ENCODE measurements at regions of chr16 and their contacts with region 1.

Region 1: DNA sequence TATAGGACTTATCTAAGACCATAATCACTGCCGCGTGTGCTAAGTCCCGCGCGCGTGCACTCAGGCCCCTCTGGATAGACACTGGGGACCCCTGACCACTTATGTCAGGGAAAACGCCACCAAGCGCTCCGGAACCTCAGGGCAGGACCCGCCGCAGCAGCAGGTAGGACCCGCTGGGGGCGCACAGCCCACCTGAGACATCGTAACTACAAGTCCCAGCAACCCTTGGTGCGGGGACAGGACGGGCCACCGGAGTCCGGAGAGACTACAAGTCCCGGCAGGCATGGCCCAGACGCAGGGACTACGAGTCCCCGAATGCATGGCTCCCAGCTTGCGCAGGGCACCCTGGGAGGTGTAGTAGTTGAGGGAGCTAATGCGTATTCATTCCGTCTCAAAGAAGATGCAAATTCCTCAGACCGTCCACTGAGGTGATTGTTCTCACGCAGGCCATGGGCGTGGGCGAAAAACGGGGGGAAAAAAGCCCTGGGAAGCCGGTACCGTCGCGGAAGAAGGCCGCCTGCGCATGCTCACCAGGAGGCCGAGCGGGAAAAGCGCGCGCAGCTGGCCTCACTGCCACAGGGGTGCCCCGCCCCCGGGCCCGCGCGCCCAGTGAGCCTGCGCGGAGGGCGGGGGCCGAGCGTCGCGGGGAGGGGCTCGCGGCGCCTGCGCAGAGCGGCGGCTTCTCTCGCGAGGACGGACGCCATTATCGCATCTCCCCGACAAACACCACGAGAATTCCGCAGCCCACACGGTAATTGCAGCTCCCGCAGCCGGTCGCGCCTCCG is at the start of gene BANP:
- DNase-seq: peak; percentile 99
- H3K4me3 ChIP-seq: peak within 1 kb of the TSS; percentile 97
- H3K27ac ChIP-seq: peak within 1 kb of the TSS; percentile 97
- H3K4me1 ChIP-seq: peaks cover 14% of the 10 kb centered on the region
- H3K27me3 ChIP-seq: no peaks in the 10 kb centered on the region
- CTCF ChIP-seq: peak; percentile 48
- total RNA-seq, gene BANP: 35.2 and 44.3 TPM in 2 replicates

Region 2: GRCh38 chr16:88022076-88023062 is 71.4 kb after region 1 on chr16:
- CTCF ChIA-PET with region 1: no interaction called
- POLR2A ChIA-PET with region 1: no interaction called
- intact Hi-C with region 1: loop called (anchors 10 kb)
- DNase-seq: no peak
- H3K4me3 ChIP-seq: no peak overlapping the region
- H3K27ac ChIP-seq: no peak overlapping the region
- H3K4me1 ChIP-seq: no peaks in the 10 kb centered on the region
- H3K27me3 ChIP-seq: no peaks in the 10 kb centered on the region
- CTCF ChIP-seq: no peak

Region 3: DNA sequence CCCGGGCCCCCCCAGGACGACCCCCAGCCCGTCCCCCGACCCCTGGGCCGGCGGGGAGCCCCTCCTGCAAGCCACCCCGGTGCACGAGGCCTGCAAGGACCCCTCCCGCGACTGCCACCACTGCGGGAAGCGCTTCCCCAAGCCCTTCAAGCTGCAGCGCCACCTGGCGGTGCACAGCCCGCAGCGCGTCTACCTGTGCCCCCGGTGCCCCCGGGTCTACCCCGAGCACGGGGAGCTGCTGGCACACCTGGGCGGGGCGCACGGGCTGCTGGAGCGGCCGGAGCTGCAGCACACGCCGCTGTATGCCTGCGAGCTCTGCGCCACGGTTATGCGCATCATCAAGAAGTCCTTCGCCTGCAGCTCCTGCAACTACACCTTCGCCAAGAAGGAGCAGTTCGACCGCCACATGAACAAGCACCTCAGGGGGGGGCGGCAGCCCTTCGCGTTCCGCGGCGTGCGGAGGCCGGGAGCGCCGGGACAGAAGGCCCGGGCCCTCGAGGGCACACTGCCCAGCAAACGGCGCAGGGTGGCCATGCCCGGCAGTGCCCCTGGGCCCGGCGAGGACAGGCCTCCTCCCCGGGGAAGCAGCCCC is 486.5 kb after region 1 on chr16:
- CTCF ChIA-PET with region 1: no interaction called
- POLR2A ChIA-PET with region 1: no interaction called
- intact Hi-C with region 1: loop called (anchors 10 kb)
- DNase-seq: peak; percentile 58
- H3K4me3 ChIP-seq: no peak overlapping the region
- H3K27ac ChIP-seq: no peak overlapping the region
- H3K4me1 ChIP-seq: no peaks in the 10 kb centered on the region
- H3K27me3 ChIP-seq: peaks cover 5% of the 10 kb centered on the region
- CTCF ChIP-seq: peak; percentile 94